ENCODE measurements at regions of chr20 and their contacts with region 1.

Region 1: DNA sequence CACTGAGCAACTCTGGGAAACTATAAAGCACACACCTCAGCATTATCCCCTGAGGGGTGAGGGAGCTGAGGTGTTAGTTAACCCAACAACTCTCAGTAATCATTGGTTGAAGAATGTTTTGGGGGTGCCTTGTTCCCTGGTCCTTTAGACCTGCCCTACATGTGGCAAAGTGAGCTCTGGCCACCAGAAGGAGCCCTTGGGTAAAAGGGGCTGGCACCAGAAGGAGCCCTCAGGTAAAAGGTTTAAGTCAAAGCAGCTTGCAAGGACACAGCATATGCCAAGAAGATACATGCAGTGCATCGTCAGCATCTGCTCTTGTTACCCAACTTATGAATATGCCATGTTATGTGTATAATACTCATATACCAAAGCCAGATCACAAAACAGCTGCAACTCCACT is 1081.7 kb downstream of the KIF16B start:
- DNase-seq: no peak
- ATAC-seq: peak; percentile 40
- H3K4me3 ChIP-seq: no peak overlapping the region
- H3K27ac ChIP-seq: no peak overlapping the region
- H3K4me1 ChIP-seq: no peaks in the 10 kb centered on the region
- H3K27me3 ChIP-seq: no peaks in the 10 kb centered on the region
- CTCF ChIP-seq: peak; percentile 18

Region 2: GRCh38 chr20:14757728-14758127 is 733.8 kb before region 1 on chr20:
- intact Hi-C with region 1: loop called (anchors 10 kb)
- DNase-seq: no peak
- ATAC-seq: no peak
- H3K4me3 ChIP-seq: no peak overlapping the region
- H3K27ac ChIP-seq: no peak overlapping the region
- H3K4me1 ChIP-seq: no peaks in the 10 kb centered on the region
- H3K27me3 ChIP-seq: no peaks in the 10 kb centered on the region
- CTCF ChIP-seq: no peak